ENCODE measurements at regions of chr5 and their contacts with region 1.

Region 1: DNA sequence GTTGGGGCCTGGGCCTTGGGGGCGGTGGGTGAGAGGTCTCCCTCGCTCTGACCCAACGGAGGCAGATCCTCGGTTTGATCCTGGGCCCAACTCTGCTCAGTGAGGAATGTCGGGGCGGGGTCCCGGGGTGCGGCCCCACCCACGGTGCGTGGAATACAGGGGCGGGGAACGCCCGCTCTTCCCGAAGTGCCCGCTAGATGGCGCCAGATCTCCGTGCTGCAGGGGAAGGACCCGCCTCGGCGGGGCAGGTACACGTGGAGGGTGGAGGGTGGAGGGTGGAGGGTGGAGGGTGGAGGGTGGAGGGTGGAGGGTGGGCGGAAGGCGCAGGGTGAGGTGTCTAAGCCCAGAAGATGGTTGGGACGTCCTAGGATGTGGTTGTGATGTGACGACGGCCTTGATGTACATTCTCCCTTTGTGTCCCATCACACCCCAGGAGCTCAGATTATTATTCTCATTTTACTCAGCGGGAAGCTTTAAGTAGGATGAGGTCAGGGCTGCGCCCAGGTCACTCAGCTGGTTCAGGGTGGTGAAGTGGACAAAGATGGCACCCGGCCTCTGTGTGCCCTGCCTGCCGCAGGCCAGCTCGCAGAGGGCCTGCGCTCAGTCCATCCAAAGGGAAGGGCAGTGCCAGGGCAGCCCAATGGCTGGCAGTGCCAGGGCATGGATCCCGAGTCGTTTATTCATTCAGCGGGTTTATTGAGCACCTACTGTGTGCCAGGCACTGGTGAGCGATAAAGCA is 9.4 kb upstream of the RPS14 start:
- DNase-seq: peak; percentile 66 to 97
- H3K4me3 ChIP-seq: no peak overlapping the region
- CTCF ChIP-seq: no peak
- POLR2A ChIP-seq: no peak

Region 2: GRCh38 chr5:150320048-150320555 is 138.9 kb before region 1 on chr5:
- intact Hi-C with region 1: no loop called
- DNase-seq: peak; percentile 88 to 93
- H3K4me3 ChIP-seq: no peak overlapping the region
- CTCF ChIP-seq: no peak
- POLR2A ChIP-seq: no peak

Region 3: DNA sequence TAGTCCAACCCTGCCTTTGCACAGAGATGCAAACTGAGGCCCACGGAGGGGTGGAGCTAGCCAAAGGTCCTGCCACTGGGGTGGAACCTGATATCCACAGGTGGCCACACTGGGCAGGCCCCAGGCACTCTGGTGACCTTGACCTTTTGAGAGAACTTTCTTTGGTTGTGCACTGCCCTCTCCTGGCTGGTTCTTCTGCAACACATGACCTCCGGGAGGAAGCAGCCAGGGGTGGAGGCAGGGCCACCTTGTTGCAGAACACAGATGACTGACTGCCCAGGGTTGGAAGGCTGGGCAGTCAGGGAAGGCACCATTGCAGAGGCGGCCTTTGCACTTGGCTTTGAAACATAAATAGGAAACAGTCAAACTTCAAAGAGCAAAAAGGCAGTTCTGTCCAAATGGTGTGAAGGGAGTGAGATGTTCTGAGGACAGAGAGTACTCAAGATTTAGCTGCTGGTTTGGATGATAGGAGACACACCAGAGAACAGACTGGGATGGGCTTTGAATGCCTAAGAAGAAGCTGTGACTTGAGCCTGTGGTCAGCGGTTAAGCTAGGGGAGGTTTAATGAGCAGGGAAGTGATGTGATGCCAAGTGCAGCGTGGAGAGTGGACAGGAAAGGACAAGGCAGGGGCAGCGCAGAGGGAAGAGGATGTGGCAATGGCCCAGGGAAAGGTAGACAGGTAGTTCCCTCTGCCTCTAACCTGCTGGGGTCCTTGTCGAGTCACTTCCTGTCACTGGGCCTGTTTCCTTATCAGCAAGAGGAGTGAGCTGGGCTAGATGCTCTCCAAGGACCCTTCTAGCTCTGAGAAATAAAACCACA is 108.3 kb before region 1 on chr5:
- intact Hi-C with region 1: no loop called
- DNase-seq: peak; percentile 70 to 91
- H3K4me3 ChIP-seq: no peak overlapping the region
- CTCF ChIP-seq: peak in 1 of 3 donors; percentile 8
- POLR2A ChIP-seq: no peak

Region 4: GRCh38 chr5:150527038-150527437 is 68.0 kb after region 1 on chr5:
- intact Hi-C with region 1: loop called (anchors 5 kb)
- DNase-seq: no peak
- H3K4me3 ChIP-seq: no peak overlapping the region
- CTCF ChIP-seq: no peak
- POLR2A ChIP-seq: no peak

Region 5: DNA sequence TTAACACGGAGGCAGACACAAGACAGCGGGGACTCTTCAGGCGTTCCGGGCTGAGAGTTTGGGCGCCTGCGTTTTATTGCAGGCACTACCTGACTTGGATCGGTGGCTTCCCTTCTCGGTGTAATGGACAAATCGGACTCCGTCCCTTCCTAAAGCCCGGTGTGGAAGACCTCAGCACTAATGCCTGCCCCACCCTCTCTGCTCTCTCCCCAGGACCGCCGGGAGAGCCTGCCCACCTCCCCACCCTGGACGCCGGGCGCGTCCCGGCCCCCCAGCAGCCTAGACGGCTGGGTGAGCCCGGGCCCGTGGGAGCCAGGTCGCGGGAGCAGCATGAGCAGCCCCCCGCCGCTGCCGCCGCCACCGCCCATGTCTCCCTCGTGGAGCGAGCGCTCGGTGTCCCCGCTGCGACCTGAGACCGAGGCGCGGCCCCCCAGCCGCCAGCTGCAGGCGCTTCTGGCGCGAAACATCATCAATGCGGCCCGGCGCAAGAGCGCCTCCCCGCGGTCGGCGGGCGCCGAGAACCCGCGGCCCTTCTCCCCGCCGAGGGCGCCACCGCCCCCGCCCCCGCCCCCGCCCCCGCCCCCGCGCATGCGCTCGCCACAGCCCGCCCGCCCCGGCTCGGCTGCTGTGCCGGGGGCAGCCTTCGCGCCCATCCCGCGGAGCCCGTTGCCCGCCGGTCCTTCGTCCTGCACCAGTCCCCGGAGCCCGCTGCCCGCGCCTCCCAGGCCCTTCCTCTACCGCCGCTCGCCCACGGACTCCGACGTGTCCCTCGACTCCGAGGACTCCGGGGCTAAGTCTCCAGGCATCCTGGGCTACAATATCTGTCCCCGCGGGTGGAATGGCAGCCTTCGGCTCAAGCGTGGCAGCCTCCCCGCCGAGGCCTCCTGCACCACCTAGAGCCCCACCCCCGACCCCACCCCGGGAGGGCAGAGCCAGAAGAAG is 197.5 kb after region 1 on chr5:
- intact Hi-C with region 1: loop called (anchors 10 kb)
- DNase-seq: peak in 1 of 2 donors; percentile 95
- H3K4me3 ChIP-seq: peak overlapping the region; percentile 27
- CTCF ChIP-seq: no peak
- POLR2A ChIP-seq: no peak

Region 6: GRCh38 chr5:150672237-150672883 is 213.4 kb after region 1 on chr5:
- intact Hi-C with region 1: no loop called
- DNase-seq: peak; percentile 48 to 94
- H3K4me3 ChIP-seq: peak overlapping the region; percentile 30
- CTCF ChIP-seq: no peak
- POLR2A ChIP-seq: no peak

Region 7: GRCh38 chr5:151030400-151030799 is 571.4 kb after region 1 on chr5:
- intact Hi-C with region 1: no loop called
- DNase-seq: peak; percentile 85 to 93
- H3K4me3 ChIP-seq: no peak overlapping the region
- CTCF ChIP-seq: no peak
- POLR2A ChIP-seq: no peak